ENCODE measurements at regions of chr2 and their contacts with region 1.

Region 1: GRCh38 chr2:200359552-200359951 is 53.1 kb downstream of the SPATS2L start:
- DNase-seq: no peak
- CTCF ChIP-seq: no peak

Region 2: GRCh38 chr2:200336980-200337615 is 22.5 kb before region 1 on chr2:
- CTCF ChIA-PET with region 1: no interaction called
- POLR2A ChIA-PET with region 1: no interaction called
- DNase-seq: no peak
- CTCF ChIP-seq: no peak

Region 3: GRCh38 chr2:200369886-200370285 is 10.3 kb after region 1 on chr2:
- CTCF ChIA-PET with region 1: interaction called, 10 read pairs
- POLR2A ChIA-PET with region 1: no interaction called
- DNase-seq: no peak
- CTCF ChIP-seq: no peak

Region 4: GRCh38 chr2:200471324-200471848 is 111.8 kb after region 1 on chr2:
- CTCF ChIA-PET with region 1: no interaction called
- POLR2A ChIA-PET with region 1: no interaction called
- DNase-seq: peak; percentile 73
- CTCF ChIP-seq: peak; percentile 62